ENCODE measurements at regions of chr2 and their contacts with region 1.

Region 1: GRCh38 chr2:159557451-159558034 is 58.8 kb downstream of the BAZ2B start:
- DNase-seq: no peak
- ATAC-seq: peak; percentile 58 to 76 (median 70)
- H3K4me3 ChIP-seq: no peak overlapping the region
- H3K27ac ChIP-seq: no peak overlapping the region
- H3K4me1 ChIP-seq: peaks cover 0 to 16% (median 1%) of the 10 kb centered on the region in 12 donors
- H3K27me3 ChIP-seq: no peaks in the 10 kb centered on the region
- CTCF ChIP-seq: peak in 10 of 12 donors; percentile 12 to 55 (median 36)
- POLR2A ChIP-seq: no peak

Region 2: DNA sequence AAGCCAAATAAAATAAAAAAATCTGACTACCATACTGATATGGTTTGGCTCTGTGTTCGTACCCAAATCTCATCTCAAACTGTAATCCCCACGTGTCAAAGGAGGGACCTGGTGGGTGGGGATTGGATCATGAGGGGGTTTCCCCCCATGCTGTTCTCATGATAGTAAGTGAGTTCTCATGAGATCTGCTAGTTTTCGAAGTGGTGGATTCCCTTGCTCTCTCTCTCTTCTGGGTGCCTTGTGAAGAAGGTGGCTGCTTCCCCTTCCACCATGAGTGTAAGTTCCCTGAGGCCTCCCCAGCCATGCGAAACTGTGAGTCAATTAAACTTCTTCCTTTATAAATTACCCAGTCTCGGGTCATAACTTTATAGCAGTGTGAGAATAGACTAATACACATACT is 147.3 kb before region 1 on chr2:
- intact Hi-C with region 1: no loop called
- DNase-seq: no peak
- ATAC-seq: no peak
- H3K4me3 ChIP-seq: no peak overlapping the region
- H3K27ac ChIP-seq: no peak overlapping the region
- H3K4me1 ChIP-seq: no peaks in the 10 kb centered on the region
- H3K27me3 ChIP-seq: no peaks in the 10 kb centered on the region
- CTCF ChIP-seq: no peak
- POLR2A ChIP-seq: no peak

Region 3: GRCh38 chr2:159573846-159574606 is 16.5 kb after region 1 on chr2:
- intact Hi-C with region 1: no loop called
- DNase-seq: no peak
- ATAC-seq: no peak
- H3K4me3 ChIP-seq: no peak overlapping the region
- H3K27ac ChIP-seq: no peak overlapping the region
- H3K4me1 ChIP-seq: peaks cover 0 to 17% (median 0%) of the 10 kb centered on the region in 12 donors
- H3K27me3 ChIP-seq: no peaks in the 10 kb centered on the region
- CTCF ChIP-seq: no peak
- POLR2A ChIP-seq: no peak

Region 4: DNA sequence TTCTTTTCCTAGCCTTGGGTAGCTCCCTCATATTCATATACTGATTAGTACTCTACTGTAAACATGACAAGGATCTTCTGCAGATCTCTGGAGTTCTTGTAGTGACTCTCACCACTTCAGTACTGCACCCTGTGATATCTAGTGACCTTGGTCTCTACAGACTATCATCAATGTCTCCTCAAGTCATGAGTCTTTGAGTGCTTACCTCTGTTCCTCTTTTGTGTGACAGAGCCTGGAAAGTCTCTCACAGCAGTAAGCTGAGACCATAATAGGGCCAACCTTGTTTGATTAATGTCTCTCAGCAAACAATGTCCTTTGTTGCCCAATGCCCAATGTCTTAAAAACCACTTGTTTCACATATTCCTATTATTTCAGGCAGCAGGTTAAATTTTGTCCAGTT is 93.0 kb after region 1 on chr2:
- intact Hi-C with region 1: no loop called
- DNase-seq: no peak
- ATAC-seq: no peak
- H3K4me3 ChIP-seq: no peak overlapping the region
- H3K27ac ChIP-seq: no peak overlapping the region
- H3K4me1 ChIP-seq: peaks cover 0 to 4% (median 0%) of the 10 kb centered on the region in 12 donors
- H3K27me3 ChIP-seq: no peaks in the 10 kb centered on the region
- CTCF ChIP-seq: no peak
- POLR2A ChIP-seq: no peak

Region 5: DNA sequence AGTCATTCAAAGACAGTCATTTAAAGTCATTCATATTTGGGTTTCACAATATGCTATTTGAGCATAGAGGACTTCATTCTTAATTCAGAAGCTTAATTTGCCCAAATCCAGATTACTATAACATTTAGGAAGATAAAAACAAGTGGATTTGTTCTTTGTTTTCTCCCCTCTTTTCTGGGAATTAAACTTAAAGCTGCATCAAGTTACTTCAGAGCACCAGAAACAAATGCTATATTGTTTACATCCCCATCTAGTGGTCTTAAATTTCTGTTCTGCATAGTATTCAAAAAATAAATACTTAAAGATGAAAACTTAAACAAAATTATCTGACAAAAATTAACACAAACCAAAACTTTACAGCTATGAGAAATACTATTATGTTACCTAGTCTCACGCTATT is 120.1 kb after region 1 on chr2:
- intact Hi-C with region 1: loop called in 1 of 10 experiments (anchors 10 kb)
- DNase-seq: no peak
- ATAC-seq: no peak
- H3K4me3 ChIP-seq: no peak overlapping the region
- H3K27ac ChIP-seq: no peak overlapping the region
- H3K4me1 ChIP-seq: peaks cover 0 to 3% (median 0%) of the 10 kb centered on the region in 12 donors
- H3K27me3 ChIP-seq: no peaks in the 10 kb centered on the region
- CTCF ChIP-seq: peak in 11 of 12 donors; percentile 12 to 53 (median 31)
- POLR2A ChIP-seq: no peak

Measured in heart left ventricle (tissue), 16 donors.